ENCODE measurements at regions of chr2 and their contacts with region 1.

Region 1: DNA sequence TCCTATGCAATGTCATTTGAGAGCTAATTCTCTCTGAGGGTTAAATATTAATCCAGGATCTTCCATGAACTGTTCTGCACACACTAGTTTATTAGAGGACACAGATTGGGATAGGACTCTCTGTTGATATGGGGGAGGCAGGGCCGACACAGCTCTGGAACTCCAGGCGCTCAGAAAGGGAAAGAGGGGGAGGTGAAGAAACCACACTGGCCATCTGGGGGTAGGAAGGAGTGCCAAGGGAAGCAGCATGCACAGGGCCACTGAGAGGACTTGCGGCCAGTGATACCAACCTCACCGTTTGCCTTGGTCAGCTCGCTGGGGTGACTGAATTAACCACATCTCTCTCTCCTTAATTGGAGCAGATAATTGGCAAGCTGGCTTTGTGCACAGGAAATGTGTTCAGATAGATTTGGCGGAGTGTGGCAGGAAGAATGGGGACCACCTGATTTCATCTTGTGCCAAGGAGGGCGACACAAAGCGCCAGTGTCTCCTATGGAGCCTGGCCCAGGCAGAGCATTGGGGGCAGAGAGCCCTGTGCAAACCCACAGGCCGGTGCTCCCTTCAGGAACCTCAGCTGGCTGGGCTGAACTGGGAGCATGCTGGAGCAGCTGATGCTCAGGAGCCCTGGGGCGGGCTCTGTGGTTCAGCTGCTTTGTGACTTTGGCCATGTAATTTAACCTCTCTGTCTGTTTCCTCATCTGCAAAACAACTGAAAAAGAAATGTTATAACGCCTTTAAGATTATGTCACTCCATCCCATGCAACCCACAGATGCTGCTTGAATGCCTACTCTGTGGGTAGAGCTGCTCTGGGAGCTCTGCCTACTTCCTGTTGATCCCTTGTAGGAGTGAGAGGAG is 114.7 kb upstream of the STON1 start:
- DNase-seq: peak in 3 of 9 donors; percentile 23 to 39 (median 34)
- ATAC-seq: peak; percentile 66
- H3K4me3 ChIP-seq: no peak overlapping the region
- H3K4me3 Mint-ChIP-seq: peak overlapping the region; percentile 18 to 69 (median 56)
- H3K27ac ChIP-seq: no peak overlapping the region
- H3K27ac Mint-ChIP-seq: peak overlapping the region; percentile 23 to 90 (median 63)
- H3K4me1 ChIP-seq: peaks cover 0 to 17% of the 10 kb centered on the region in 2 donors
- H3K4me1 Mint-ChIP-seq: peaks cover 23 to 43% (median 37%) of the 10 kb centered on the region in 7 donors
- H3K27me3 ChIP-seq: no peaks in the 10 kb centered on the region
- H3K27me3 Mint-ChIP-seq: no peaks in the 10 kb centered on the region

Region 2: DNA sequence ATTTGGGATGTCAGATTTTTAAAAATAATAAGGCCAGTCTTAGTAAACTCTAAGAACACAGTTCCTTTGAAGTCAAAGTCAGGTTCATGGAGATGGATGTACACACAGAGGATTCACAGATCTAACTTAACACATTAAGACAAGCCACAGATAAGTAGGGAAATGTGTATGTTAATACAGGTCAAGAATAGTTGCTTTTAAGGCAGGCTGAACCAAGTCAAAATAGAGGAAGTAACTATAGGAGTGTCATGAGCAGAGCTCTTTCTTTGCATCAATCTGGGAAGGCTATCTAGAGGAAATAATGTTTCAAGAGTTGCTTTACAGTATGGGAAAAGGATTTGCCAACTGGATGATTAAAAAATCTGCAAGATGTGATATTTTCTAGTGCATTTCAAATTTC is 380.9 kb before region 1 on chr2:
- CTCF ChIA-PET with region 1: no interaction called
- POLR2A ChIA-PET with region 1: no interaction called
- intact Hi-C with region 1: no loop called
- DNase-seq: no peak
- ATAC-seq: no peak
- H3K4me3 ChIP-seq: no peak overlapping the region
- H3K4me3 Mint-ChIP-seq: no peak overlapping the region
- H3K27ac ChIP-seq: no peak overlapping the region
- H3K27ac Mint-ChIP-seq: no peak overlapping the region
- H3K4me1 ChIP-seq: no peaks in the 10 kb centered on the region
- H3K4me1 Mint-ChIP-seq: no peaks in the 10 kb centered on the region
- H3K27me3 ChIP-seq: no peaks in the 10 kb centered on the region
- H3K27me3 Mint-ChIP-seq: no peaks in the 10 kb centered on the region

Region 3: GRCh38 chr2:48369971-48370370 is 45.2 kb before region 1 on chr2:
- CTCF ChIA-PET with region 1: no interaction called
- POLR2A ChIA-PET with region 1: no interaction called
- intact Hi-C with region 1: no loop called
- DNase-seq: no peak
- ATAC-seq: no peak
- H3K4me3 ChIP-seq: no peak overlapping the region
- H3K4me3 Mint-ChIP-seq: no peak overlapping the region
- H3K27ac ChIP-seq: no peak overlapping the region
- H3K27ac Mint-ChIP-seq: peak overlapping the region in 4 of 9 donors; percentile 4 to 82 (median 51)
- H3K4me1 ChIP-seq: no peaks in the 10 kb centered on the region
- H3K4me1 Mint-ChIP-seq: peaks cover 12 to 34% (median 29%) of the 10 kb centered on the region in 7 donors
- H3K27me3 ChIP-seq: no peaks in the 10 kb centered on the region
- H3K27me3 Mint-ChIP-seq: no peaks in the 10 kb centered on the region

Region 4: GRCh38 chr2:48383046-48383445 is 32.2 kb before region 1 on chr2:
- CTCF ChIA-PET with region 1: no interaction called
- POLR2A ChIA-PET with region 1: no interaction called
- intact Hi-C with region 1: loop called in 1 of 2 experiments (anchors 5 kb)
- DNase-seq: no peak
- ATAC-seq: no peak
- H3K4me3 ChIP-seq: no peak overlapping the region
- H3K4me3 Mint-ChIP-seq: no peak overlapping the region
- H3K27ac ChIP-seq: no peak overlapping the region
- H3K27ac Mint-ChIP-seq: no peak overlapping the region
- H3K4me1 ChIP-seq: no peaks in the 10 kb centered on the region
- H3K4me1 Mint-ChIP-seq: peaks cover 0 to 1% (median 0%) of the 10 kb centered on the region in 7 donors
- H3K27me3 ChIP-seq: no peaks in the 10 kb centered on the region
- H3K27me3 Mint-ChIP-seq: peaks cover 0 to 2% (median 0%) of the 10 kb centered on the region in 5 donors

Region 5: DNA sequence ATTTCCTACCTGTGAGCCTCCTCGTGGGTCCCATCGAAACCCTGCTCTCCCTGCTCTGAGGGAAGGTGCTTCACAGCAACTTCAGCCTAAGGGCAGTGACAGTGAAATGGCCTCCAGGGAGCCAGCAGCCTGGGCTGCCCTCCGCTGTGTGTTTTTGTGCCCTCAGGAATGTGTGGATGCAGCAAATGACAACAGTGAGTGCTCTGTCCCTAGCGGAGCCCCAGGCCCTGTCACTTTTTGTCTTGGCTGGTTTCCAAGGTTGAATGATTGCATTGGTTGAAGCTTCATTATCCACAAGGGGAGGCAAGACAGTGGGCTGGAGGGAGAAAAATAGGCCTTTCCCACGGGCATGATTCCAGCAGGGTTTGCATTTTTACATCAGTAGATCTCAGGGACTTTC is 157.6 kb after region 1 on chr2:
- CTCF ChIA-PET with region 1: no interaction called
- POLR2A ChIA-PET with region 1: no interaction called
- intact Hi-C with region 1: no loop called
- DNase-seq: no peak
- ATAC-seq: no peak
- H3K4me3 ChIP-seq: no peak overlapping the region
- H3K4me3 Mint-ChIP-seq: no peak overlapping the region
- H3K27ac ChIP-seq: no peak overlapping the region
- H3K27ac Mint-ChIP-seq: no peak overlapping the region
- H3K4me1 ChIP-seq: no peaks in the 10 kb centered on the region
- H3K4me1 Mint-ChIP-seq: peaks cover 0 to 8% (median 5%) of the 10 kb centered on the region in 7 donors
- H3K27me3 ChIP-seq: no peaks in the 10 kb centered on the region
- H3K27me3 Mint-ChIP-seq: no peaks in the 10 kb centered on the region

Measured in naive thymus-derived CD4-positive, alpha-beta T cell (primary cell).